GM13976 (cell line): ENCODE measurements at regions of chr16 and their contacts with region 1.

Region 1: GRCh38 chr16:67415872-67416793 is at the start of gene ZDHHC1:
- DNase-seq: peak; percentile 91
- CTCF ChIP-seq: peak; percentile 76

Region 2: GRCh38 chr16:66961065-66961744 is 454.9 kb before region 1 on chr16 and contains the start of gene CES3:
- in situ Hi-C with region 1: loop called (anchors 25 kb)
- DNase-seq: peak; percentile 77
- CTCF ChIP-seq: peak; percentile 74

Region 3: DNA sequence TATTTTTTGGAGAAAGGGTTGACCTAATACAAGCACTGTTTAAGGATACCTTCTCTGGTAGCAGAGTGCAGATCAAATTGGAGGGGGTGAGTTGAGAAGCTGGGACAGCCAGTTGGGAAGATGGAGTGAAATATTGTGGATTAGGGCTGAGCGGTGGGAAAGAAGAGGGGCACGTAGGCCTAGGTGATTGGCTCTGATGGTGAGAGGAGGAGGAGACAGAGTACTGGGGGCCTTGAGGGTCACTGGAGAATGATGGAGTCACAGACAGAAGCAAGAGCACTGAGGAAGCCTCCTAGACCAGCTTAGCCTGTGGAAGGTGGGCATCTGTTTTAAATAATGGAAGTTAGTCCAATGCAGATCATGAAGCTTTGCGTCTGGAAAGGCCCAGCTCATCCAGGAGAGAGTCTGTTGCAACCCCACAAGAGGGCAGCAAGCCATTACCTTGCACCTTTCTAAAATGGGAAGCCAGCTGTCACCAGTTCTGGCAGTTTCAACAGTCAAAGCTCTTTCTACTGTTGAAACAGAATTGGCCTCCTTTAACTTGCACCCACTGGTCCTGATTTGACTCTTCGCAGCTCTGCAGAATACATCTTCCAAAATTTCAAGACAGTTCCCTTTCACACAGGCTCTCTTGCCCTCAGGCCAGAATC is 155.6 kb before region 1 on chr16:
- in situ Hi-C with region 1: loop called (anchors 25 kb)
- DNase-seq: peak; percentile 79
- CTCF ChIP-seq: peak; percentile 56

Region 4: GRCh38 chr16:67719048-67719777 is 303.1 kb after region 1 on chr16 and contains the start of gene GFOD2:
- in situ Hi-C with region 1: no loop called
- DNase-seq: peak; percentile 100
- CTCF ChIP-seq: no peak